Gastrocnemius medialis (tissue), 4 donors: ENCODE measurements at regions of chr1 and their contacts with region 1.

Region 1: DNA sequence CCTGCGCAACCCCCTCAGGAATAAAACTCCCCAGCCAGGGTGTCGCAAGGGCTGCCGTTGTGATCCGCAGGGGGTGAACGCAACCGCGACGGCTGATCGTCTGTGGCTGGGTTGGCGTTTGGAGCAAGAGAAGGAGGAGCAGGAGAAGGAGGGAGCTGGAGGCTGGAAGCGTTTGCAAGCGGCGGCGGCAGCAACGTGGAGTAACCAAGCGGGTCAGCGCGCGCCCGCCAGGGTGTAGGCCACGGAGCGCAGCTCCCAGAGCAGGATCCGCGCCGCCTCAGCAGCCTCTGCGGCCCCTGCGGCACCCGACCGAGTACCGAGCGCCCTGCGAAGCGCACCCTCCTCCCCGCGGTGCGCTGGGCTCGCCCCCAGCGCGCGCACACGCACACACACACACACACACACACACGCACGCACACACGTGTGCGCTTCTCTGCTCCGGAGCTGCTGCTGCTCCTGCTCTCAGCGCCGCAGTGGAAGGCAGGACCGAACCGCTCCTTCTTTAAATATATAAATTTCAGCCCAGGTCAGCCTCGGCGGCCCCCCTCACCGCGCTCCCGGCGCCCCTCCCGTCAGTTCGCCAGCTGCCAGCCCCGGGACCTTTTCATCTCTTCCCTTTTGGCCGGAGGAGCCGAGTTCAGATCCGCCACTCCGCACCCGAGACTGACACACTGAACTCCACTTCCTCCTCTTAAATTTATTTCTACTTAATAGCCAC is 696 bp downstream of the TGFB2 start:
- DNase-seq: peak; percentile 49 to 72
- ATAC-seq: peak; percentile 46 to 52
- H3K4me3 ChIP-seq: peak overlapping the region; percentile 66 to 86 (median 70)
- H3K27ac ChIP-seq: peak overlapping the region; percentile 90 to 94 (median 92)
- H3K4me1 ChIP-seq: peaks cover 27 to 30% of the 10 kb centered on the region in 2 donors
- H3K27me3 ChIP-seq: no peaks in the 10 kb centered on the region
- CTCF ChIP-seq: peak in 1 of 5 experiments; percentile 15
- POLR2A ChIP-seq: peak in 1 of 2 donors; percentile 6

Region 2: GRCh38 chr1:218480137-218480536 is 134.3 kb after region 1 on chr1:
- in situ Hi-C with region 1: loop called in 1 of 4 experiments (anchors 10 kb)
- intact Hi-C with region 1: loop called (anchors 2 kb)
- DNase-seq: peak in 1 of 2 donors; percentile 54
- ATAC-seq: peak; percentile 29 to 37
- H3K4me3 ChIP-seq: no peak overlapping the region
- H3K27ac ChIP-seq: peak overlapping the region; percentile 37 to 92 (median 87)
- H3K4me1 ChIP-seq: peaks cover 25 to 32% of the 10 kb centered on the region in 2 donors
- H3K27me3 ChIP-seq: no peaks in the 10 kb centered on the region
- CTCF ChIP-seq: no peak
- POLR2A ChIP-seq: no peak

Region 3: GRCh38 chr1:218529646-218530310 is 183.9 kb after region 1 on chr1:
- in situ Hi-C with region 1: loop called in 2 of 4 experiments (anchors 5 to 10 kb)
- intact Hi-C with region 1: no loop called
- DNase-seq: no peak
- ATAC-seq: peak; percentile 24 to 30
- H3K4me3 ChIP-seq: no peak overlapping the region
- H3K27ac ChIP-seq: no peak overlapping the region
- H3K4me1 ChIP-seq: peaks cover 8 to 22% of the 10 kb centered on the region in 2 donors
- H3K27me3 ChIP-seq: no peaks in the 10 kb centered on the region
- CTCF ChIP-seq: no peak
- POLR2A ChIP-seq: no peak

Region 4: GRCh38 chr1:218742467-218743260 is 396.8 kb after region 1 on chr1:
- in situ Hi-C with region 1: no loop called
- intact Hi-C with region 1: no loop called
- DNase-seq: no peak
- ATAC-seq: no peak
- H3K4me3 ChIP-seq: no peak overlapping the region
- H3K27ac ChIP-seq: no peak overlapping the region
- H3K4me1 ChIP-seq: no peaks in the 10 kb centered on the region
- H3K27me3 ChIP-seq: no peaks in the 10 kb centered on the region
- CTCF ChIP-seq: no peak
- POLR2A ChIP-seq: no peak

Region 5: GRCh38 chr1:219066631-219067349 is 721.0 kb after region 1 on chr1:
- in situ Hi-C with region 1: no loop called
- intact Hi-C with region 1: loop called (anchors 10 kb)
- DNase-seq: no peak
- ATAC-seq: no peak
- H3K4me3 ChIP-seq: no peak overlapping the region
- H3K27ac ChIP-seq: no peak overlapping the region
- H3K4me1 ChIP-seq: no peaks in the 10 kb centered on the region
- H3K27me3 ChIP-seq: no peaks in the 10 kb centered on the region
- CTCF ChIP-seq: peak in 1 of 5 experiments; percentile 16
- POLR2A ChIP-seq: no peak

Region 6: DNA sequence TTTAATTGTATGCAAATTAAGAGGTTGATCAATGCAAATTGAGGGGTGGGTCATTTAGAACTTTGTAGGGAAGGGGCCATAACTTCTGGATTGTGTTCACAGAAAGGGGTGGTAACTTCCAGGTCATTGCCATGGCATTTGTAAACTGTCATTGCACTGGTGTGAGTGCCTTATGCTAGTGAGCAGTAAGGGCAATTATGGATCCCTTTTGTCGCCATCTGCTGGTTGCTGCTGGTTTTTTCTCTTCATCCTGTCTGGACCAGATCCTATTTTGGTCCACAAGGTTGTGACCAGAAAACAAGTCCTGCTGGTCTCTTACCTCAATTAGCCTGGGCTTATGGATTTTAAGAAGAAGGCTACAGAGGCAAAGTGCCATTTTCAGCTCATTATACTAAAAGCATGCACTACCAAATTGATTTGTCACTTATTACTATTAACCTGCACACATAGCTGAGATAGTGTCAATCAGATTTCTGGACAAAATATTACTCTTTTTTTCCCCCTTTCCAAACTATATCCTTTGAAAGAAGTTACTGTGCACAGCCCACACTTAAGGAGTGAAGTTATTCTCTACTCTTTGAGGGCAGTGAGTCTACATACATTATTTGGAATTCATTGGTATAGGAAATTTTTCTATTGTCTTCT is 1070.9 kb after region 1 on chr1:
- in situ Hi-C with region 1: loop called in 1 of 4 experiments (anchors 25 kb)
- intact Hi-C with region 1: no loop called
- DNase-seq: peak in 1 of 2 donors; percentile 24
- ATAC-seq: peak in 1 of 2 donors; percentile 33
- H3K4me3 ChIP-seq: no peak overlapping the region
- H3K27ac ChIP-seq: no peak overlapping the region
- H3K4me1 ChIP-seq: peaks cover 4 to 7% of the 10 kb centered on the region in 2 donors
- H3K27me3 ChIP-seq: no peaks in the 10 kb centered on the region
- CTCF ChIP-seq: peak in 4 of 5 experiments; percentile 22 to 53 (median 34)
- POLR2A ChIP-seq: no peak